ENCODE measurements at regions of chr5 and their contacts with region 1.

Region 1: GRCh38 chr5:75496026-75496425 is 15.4 kb downstream of the CERT1 start:
- DNase-seq: no peak
- H3K4me3 Mint-ChIP-seq: no peak overlapping the region
- H3K27ac Mint-ChIP-seq: no peak overlapping the region
- H3K4me1 Mint-ChIP-seq: peaks cover 26% of the 10 kb centered on the region
- H3K27me3 Mint-ChIP-seq: no peaks in the 10 kb centered on the region

Region 2: GRCh38 chr5:75460942-75461610 is 35.0 kb before region 1 on chr5:
- intact Hi-C with region 1: loop called (anchors 5 kb)
- DNase-seq: no peak
- H3K4me3 Mint-ChIP-seq: no peak overlapping the region
- H3K27ac Mint-ChIP-seq: no peak overlapping the region
- H3K4me1 Mint-ChIP-seq: peaks cover 19% of the 10 kb centered on the region
- H3K27me3 Mint-ChIP-seq: no peaks in the 10 kb centered on the region

Region 3: GRCh38 chr5:76715736-76716455 is 1219.9 kb after region 1 on chr5 and contains the start of gene F2R:
- intact Hi-C with region 1: no loop called
- DNase-seq: peak; percentile 37
- H3K4me3 Mint-ChIP-seq: peak within 1 kb of the TSS; percentile 82
- H3K27ac Mint-ChIP-seq: peak within 1 kb of the TSS; percentile 22
- H3K4me1 Mint-ChIP-seq: peaks cover 36% of the 10 kb centered on the region
- H3K27me3 Mint-ChIP-seq: peaks cover 25% of the 10 kb centered on the region
- total RNA-seq, gene F2R: 2.8 and 3.3 TPM in 2 replicates

Measured in activated T-helper 2 cell treated with anti-CD3 and anti-CD28 coated beads, Interferon-gamma antibody, Interleukin-2, Interleukin-4, amounts not matched to agents 10 μg/mL and 5 μg/mL and 100 μg/mL, durations not matched to agents 14 hours and 24 hours and 36 hours (primary cell).